Calu3 (cell line): ENCODE measurements at regions of chr7 and their contacts with region 1.

Region 1: DNA sequence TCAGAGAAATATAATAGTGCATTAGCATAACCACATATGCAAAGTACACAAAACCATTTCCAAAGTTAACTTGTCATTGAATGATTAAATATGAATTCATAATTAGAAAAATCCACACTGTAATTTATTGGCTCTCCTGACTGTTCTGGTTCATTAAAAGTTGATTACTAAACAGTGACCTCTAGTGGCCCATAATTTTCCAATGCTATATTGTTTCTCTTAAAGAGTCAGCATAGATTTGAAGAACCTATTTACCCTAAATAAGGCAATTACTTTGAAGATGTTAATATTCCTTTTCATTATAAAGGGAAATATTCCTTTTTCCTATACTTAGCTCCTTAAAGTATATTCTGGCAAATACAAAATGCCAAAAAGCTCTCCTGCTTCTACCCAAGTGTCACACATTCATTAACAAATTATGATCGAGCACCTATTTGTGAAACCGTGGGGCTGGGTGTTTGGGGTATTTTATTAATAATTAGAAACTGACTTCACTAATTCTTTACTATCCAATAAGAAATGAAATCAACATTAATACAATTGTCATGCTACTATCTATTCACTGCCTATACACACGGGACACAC is 86.2 kb downstream of the HIBADH start:
- DNase-seq: peak; percentile 34
- H3K4me3 Mint-ChIP-seq: no peak overlapping the region
- H3K27ac Mint-ChIP-seq: no peak overlapping the region
- H3K4me1 Mint-ChIP-seq: peaks cover 15% of the 10 kb centered on the region
- H3K27me3 Mint-ChIP-seq: no peaks in the 10 kb centered on the region
- CTCF ChIP-seq: peak; percentile 42

Region 2: GRCh38 chr7:27210441-27211083 is 365.9 kb before region 1 on chr7:
- CTCF ChIA-PET with region 1: no interaction called
- intact Hi-C with region 1: loop called (anchors 1 kb)
- DNase-seq: peak; percentile 76
- H3K4me3 Mint-ChIP-seq: peak overlapping the region; percentile 71
- H3K27ac Mint-ChIP-seq: no peak overlapping the region
- H3K4me1 Mint-ChIP-seq: peaks cover 8% of the 10 kb centered on the region
- H3K27me3 Mint-ChIP-seq: peaks cover 23% of the 10 kb centered on the region
- CTCF ChIP-seq: peak; percentile 93

Region 3: GRCh38 chr7:27235387-27236311 is 340.8 kb before region 1 on chr7:
- CTCF ChIA-PET with region 1: interaction called, 6 read pairs
- intact Hi-C with region 1: loop called (anchors 1 kb)
- DNase-seq: peak; percentile 91
- H3K4me3 Mint-ChIP-seq: peak overlapping the region; percentile 84
- H3K27ac Mint-ChIP-seq: peak overlapping the region; percentile 37
- H3K4me1 Mint-ChIP-seq: no peaks in the 10 kb centered on the region
- H3K27me3 Mint-ChIP-seq: peaks cover 30% of the 10 kb centered on the region
- CTCF ChIP-seq: peak; percentile 74

Region 4: GRCh38 chr7:27254625-27255024 is 321.8 kb before region 1 on chr7:
- CTCF ChIA-PET with region 1: no interaction called
- intact Hi-C with region 1: no loop called
- DNase-seq: no peak
- H3K4me3 Mint-ChIP-seq: no peak overlapping the region
- H3K27ac Mint-ChIP-seq: no peak overlapping the region
- H3K4me1 Mint-ChIP-seq: peaks cover 8% of the 10 kb centered on the region
- H3K27me3 Mint-ChIP-seq: peaks cover 48% of the 10 kb centered on the region
- CTCF ChIP-seq: no peak

Region 5: GRCh38 chr7:27501001-27501400 is 75.5 kb before region 1 on chr7:
- CTCF ChIA-PET with region 1: no interaction called
- intact Hi-C with region 1: no loop called
- DNase-seq: no peak
- H3K4me3 Mint-ChIP-seq: no peak overlapping the region
- H3K27ac Mint-ChIP-seq: no peak overlapping the region
- H3K4me1 Mint-ChIP-seq: no peaks in the 10 kb centered on the region
- H3K27me3 Mint-ChIP-seq: no peaks in the 10 kb centered on the region
- CTCF ChIP-seq: no peak